ENCODE measurements at regions of chr13 and their contacts with region 1.

Region 1: DNA sequence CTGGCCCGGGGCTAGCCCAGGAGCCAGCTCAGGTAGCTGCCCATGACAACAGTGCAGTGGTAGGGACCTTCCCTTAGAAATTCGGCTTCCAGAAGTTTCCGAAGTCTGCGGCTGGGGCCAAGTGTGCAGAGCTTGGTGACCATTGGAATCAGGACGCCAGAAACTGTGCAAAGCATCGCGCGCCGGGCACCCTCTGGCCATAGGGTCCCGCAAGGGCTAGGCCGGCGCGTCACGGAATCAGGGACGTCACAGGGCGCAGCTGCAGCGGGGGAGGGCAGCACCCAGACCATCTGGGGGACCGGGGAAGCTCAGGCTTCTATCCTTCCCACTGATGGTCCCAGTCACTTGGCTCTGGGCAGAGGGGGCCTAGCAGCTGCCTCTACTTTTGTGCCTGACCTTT is 219.1 kb downstream of the MTUS2 start:
- DNase-seq: no peak
- H3K4me3 Mint-ChIP-seq: no peak overlapping the region
- H3K27ac Mint-ChIP-seq: no peak overlapping the region
- H3K4me1 Mint-ChIP-seq: no peaks in the 10 kb centered on the region
- H3K27me3 Mint-ChIP-seq: no peaks in the 10 kb centered on the region

Region 2: GRCh38 chr13:28357911-28358433 is 681.2 kb before region 1 on chr13:
- intact Hi-C with region 1: no loop called
- DNase-seq: no peak
- H3K4me3 Mint-ChIP-seq: no peak overlapping the region
- H3K27ac Mint-ChIP-seq: peak overlapping the region; percentile 49
- H3K4me1 Mint-ChIP-seq: peaks cover 52% of the 10 kb centered on the region
- H3K27me3 Mint-ChIP-seq: peaks cover 3% of the 10 kb centered on the region

Region 3: DNA sequence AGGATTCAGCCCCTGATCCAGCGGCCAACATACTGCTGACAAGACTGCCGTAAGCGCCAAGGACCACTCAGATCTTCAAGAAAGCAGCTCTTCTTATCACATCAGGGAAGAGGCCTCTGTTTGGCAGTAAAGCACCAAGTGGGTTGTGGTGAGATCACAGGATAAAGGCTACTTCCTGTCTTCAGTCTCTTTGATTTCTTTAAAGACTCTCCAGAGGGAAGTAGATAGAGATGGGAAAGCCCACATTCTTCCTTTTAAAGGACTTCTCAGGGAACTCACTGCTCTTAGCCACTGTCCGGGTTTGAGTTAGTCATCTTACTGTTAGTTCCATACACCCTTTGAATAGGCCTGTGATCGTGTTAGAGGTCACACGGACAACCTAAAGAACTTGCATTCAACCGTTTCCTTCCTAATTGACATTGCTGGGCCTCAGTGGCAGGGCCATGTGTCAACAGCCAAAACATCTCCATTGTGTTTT is 427.5 kb before region 1 on chr13:
- intact Hi-C with region 1: no loop called
- DNase-seq: peak; percentile 19
- H3K4me3 Mint-ChIP-seq: peak overlapping the region; percentile 46
- H3K27ac Mint-ChIP-seq: peak overlapping the region; percentile 57
- H3K4me1 Mint-ChIP-seq: peaks cover 41% of the 10 kb centered on the region
- H3K27me3 Mint-ChIP-seq: no peaks in the 10 kb centered on the region

Region 4: GRCh38 chr13:29339386-29340272 is 300.4 kb after region 1 on chr13:
- intact Hi-C with region 1: loop called (anchors 5 kb)
- DNase-seq: no peak
- H3K4me3 Mint-ChIP-seq: no peak overlapping the region
- H3K27ac Mint-ChIP-seq: no peak overlapping the region
- H3K4me1 Mint-ChIP-seq: no peaks in the 10 kb centered on the region
- H3K27me3 Mint-ChIP-seq: peaks cover 3% of the 10 kb centered on the region

Measured in activated T-helper 1 cell treated with anti-CD3 and anti-CD28 coated beads, Interleukin-12 subunit alpha, Interleukin-12 subunit beta, Interleukin-2, Interleukin-4 antibody, amounts not matched to agents 30 ng/mL and 10 ng/mL and 1 ng/mL, durations not matched to agents 14 hours and 24 hours and 36 hours (primary cell).